ENCODE measurements at regions of chr17 and their contacts with region 1.

Region 1: DNA sequence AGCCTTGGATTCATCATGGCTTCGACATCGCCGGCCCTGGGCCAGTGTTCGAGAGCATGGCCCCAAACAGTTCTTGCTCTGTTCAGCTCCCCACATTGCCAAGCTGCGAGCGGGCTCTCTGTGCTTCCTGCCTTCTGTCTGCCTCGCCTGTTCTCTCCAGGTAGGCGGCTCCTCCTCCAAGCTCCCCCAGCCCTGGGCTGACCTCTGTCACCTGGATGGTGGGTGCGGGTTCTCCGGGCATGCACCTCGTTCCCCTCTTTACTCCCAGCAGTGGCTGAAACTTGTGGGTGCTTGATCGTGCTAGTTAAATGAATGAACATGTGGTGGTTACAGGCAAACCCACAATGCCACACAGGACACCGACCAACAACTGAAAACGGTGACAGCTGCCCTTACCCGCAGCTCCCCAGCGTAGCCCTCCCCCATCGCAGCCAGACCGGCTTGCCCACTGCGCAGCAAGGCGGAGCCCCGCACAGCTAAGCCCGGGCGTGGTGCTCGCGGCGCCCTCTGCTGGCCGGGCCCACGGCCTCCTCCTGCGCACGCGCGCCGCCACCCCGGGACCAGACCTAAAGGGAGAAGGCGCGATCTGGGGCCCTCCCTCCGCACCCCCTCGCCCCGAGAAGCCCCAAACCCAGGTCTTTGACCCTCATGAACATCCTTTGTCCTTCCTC is 23.0 kb upstream of the EIF1 start:
- DNase-seq: peak; percentile 84 to 92 (median 88)
- H3K4me3 ChIP-seq: peak overlapping the region; percentile 69 to 71
- H3K4me3 Mint-ChIP-seq: peak overlapping the region; percentile 82 to 97 (median 92)
- H3K27ac ChIP-seq: peak overlapping the region; percentile 96
- H3K27ac Mint-ChIP-seq: peak overlapping the region; percentile 94 to 100 (median 98)
- H3K4me1 ChIP-seq: peaks cover 22% of the 10 kb centered on the region
- H3K4me1 Mint-ChIP-seq: peaks cover 13 to 35% (median 21%) of the 10 kb centered on the region in 4 donors
- H3K27me3 ChIP-seq: no peaks in the 10 kb centered on the region
- H3K27me3 Mint-ChIP-seq: peaks cover 0 to under 1% of the 10 kb centered on the region in 2 donors

Region 2: DNA sequence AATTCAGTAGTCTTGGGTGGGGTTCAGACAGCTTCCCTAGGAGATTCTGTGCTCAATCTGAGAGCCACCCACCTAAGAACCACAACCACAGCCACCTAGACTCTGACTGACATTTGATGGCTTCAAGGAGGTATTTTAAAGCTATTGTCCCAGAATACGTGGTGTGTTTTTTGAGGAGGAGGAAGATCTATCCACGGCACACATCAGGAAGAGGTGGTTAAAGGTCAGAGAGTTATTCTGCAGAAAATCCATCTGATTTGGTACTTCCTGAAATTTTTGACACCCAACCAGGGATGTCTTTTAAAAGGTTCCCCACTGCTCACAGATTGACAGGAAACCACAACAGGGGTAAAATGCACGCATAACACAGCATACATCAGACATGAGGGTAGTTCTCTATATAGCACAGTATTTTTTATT is 1043.2 kb before region 1 on chr17:
- CTCF ChIA-PET with region 1: interaction called, 5 read pairs
- POLR2A ChIA-PET with region 1: no interaction called
- intact Hi-C with region 1: loop called (anchors 5 kb)
- DNase-seq: peak; percentile 34 to 59 (median 46)
- H3K4me3 ChIP-seq: no peak overlapping the region
- H3K4me3 Mint-ChIP-seq: peak overlapping the region in 7 of 8 donors; percentile 1 to 74 (median 49)
- H3K27ac ChIP-seq: peak overlapping the region; percentile 7
- H3K27ac Mint-ChIP-seq: peak overlapping the region; percentile 37 to 88 (median 72)
- H3K4me1 ChIP-seq: peaks cover 51% of the 10 kb centered on the region
- H3K4me1 Mint-ChIP-seq: peaks cover 31 to 42% (median 38%) of the 10 kb centered on the region in 4 donors
- H3K27me3 ChIP-seq: no peaks in the 10 kb centered on the region
- H3K27me3 Mint-ChIP-seq: no peaks in the 10 kb centered on the region

Region 3: DNA sequence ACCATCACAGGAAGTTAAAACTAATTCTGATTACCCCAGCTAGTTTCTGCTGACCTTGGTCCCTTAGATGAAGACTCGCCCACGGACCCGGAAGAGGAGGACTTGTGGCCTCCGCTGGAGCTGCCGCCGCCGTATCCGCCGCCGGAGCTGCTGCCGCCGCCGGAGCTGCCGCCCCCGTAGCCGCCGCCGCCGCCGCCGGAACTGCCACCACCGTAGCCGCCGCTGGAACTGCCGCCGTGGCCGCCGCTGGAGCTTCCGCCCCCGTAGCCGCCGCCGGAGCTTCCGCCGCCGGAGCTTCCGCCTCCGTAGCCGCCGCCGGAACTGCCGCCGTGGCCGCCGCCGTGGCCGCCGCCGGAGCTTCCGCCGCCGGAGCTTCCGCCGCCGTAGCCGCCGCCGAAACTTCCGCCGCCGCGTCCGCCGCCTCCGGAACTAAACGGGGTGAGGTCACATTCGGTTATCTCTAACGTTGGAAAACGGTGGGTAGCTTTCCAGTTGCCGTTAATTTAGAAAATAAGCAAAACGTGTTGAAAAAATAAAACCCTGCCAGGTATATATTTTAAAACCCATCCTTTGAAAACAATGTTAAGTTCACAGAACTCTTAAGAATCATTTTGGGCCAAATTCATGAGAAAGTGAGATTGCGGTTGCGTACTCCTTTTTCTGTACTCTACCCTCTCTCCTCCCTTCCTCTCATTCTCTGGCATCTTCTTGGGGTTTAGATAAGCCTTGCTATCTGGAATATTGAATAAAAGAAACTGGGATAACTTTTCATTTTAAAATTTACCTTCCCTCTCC is 846.8 kb before region 1 on chr17:
- CTCF ChIA-PET with region 1: interaction called, 8 read pairs
- POLR2A ChIA-PET with region 1: interaction called, 13 read pairs
- intact Hi-C with region 1: loop called (anchors 1 kb)
- DNase-seq: peak; percentile 82 to 87 (median 84)
- H3K4me3 ChIP-seq: peak overlapping the region; percentile 65 to 83
- H3K4me3 Mint-ChIP-seq: peak overlapping the region; percentile 84 to 97 (median 94)
- H3K27ac ChIP-seq: peak overlapping the region; percentile 62
- H3K27ac Mint-ChIP-seq: peak overlapping the region; percentile 86 to 97 (median 94)
- H3K4me1 ChIP-seq: peaks cover 22% of the 10 kb centered on the region
- H3K4me1 Mint-ChIP-seq: peaks cover 5 to 31% (median 15%) of the 10 kb centered on the region in 4 donors
- H3K27me3 ChIP-seq: no peaks in the 10 kb centered on the region
- H3K27me3 Mint-ChIP-seq: peaks cover 6 to 12% of the 10 kb centered on the region in 2 donors

Region 4: DNA sequence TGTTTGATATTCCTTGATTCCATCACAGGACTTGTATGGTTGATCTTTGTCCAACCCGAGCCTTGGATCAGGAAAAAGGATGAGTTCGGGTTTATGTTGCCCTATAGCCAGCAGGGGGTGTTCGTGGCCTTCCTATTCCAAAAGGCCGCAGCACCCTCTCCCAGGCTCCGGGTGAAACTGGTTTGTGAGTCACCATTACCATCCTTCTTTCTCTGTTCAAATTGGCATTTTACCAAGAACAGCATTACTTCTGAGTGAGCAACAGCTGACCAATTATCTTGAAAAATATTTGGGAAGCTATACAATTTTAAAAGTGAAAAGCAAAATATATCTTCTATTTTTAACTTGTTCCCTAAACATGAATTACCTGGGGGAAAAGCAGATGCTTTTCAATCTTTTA is 756.4 kb before region 1 on chr17:
- CTCF ChIA-PET with region 1: interaction called, 35 read pairs
- POLR2A ChIA-PET with region 1: no interaction called
- intact Hi-C with region 1: loop called (anchors 1 kb)
- DNase-seq: peak; percentile 48 to 69 (median 60)
- H3K4me3 ChIP-seq: no peak overlapping the region
- H3K4me3 Mint-ChIP-seq: no peak overlapping the region
- H3K27ac ChIP-seq: no peak overlapping the region
- H3K27ac Mint-ChIP-seq: no peak overlapping the region
- H3K4me1 ChIP-seq: no peaks in the 10 kb centered on the region
- H3K4me1 Mint-ChIP-seq: no peaks in the 10 kb centered on the region
- H3K27me3 ChIP-seq: no peaks in the 10 kb centered on the region
- H3K27me3 Mint-ChIP-seq: peaks cover 23 to 39% of the 10 kb centered on the region in 2 donors

Region 5: GRCh38 chr17:41678907-41679739 is 13.4 kb after region 1 on chr17:
- CTCF ChIA-PET with region 1: interaction called, 96 read pairs
- POLR2A ChIA-PET with region 1: interaction called, 94 read pairs
- intact Hi-C with region 1: loop called (anchors 1 kb)
- DNase-seq: peak; percentile 78 to 90 (median 83)
- H3K4me3 ChIP-seq: peak overlapping the region; percentile 32 to 51
- H3K4me3 Mint-ChIP-seq: peak overlapping the region; percentile 84 to 96 (median 90)
- H3K27ac ChIP-seq: peak overlapping the region; percentile 59
- H3K27ac Mint-ChIP-seq: peak overlapping the region; percentile 91 to 99 (median 97)
- H3K4me1 ChIP-seq: peaks cover 37% of the 10 kb centered on the region
- H3K4me1 Mint-ChIP-seq: peaks cover 16 to 33% (median 27%) of the 10 kb centered on the region in 4 donors
- H3K27me3 ChIP-seq: no peaks in the 10 kb centered on the region
- H3K27me3 Mint-ChIP-seq: no peaks in the 10 kb centered on the region